ENCODE measurements at regions of chr17 and their contacts with region 1.

Region 1: GRCh38 chr17:49997791-49998703 is 3.0 kb upstream of the DLX3 start:
- DNase-seq: peak; percentile 58 to 91
- H3K4me3 ChIP-seq: no peak overlapping the region
- H3K27ac ChIP-seq: no peak overlapping the region
- H3K4me1 ChIP-seq: peaks cover 3 to 29% (median 11%) of the 10 kb centered on the region in 4 experiments; a peak in 6 of 7 replicates
- H3K27me3 ChIP-seq: peaks cover 32 to 66% (median 52%) of the 10 kb centered on the region in 4 experiments
- CTCF ChIP-seq: peak; percentile 72 to 94 (median 92)
- EP300 ChIP-seq: no peak
- POLR2A ChIP-seq: no peak
- RAD21 ChIP-seq: peak; percentile 99

Region 2: DNA sequence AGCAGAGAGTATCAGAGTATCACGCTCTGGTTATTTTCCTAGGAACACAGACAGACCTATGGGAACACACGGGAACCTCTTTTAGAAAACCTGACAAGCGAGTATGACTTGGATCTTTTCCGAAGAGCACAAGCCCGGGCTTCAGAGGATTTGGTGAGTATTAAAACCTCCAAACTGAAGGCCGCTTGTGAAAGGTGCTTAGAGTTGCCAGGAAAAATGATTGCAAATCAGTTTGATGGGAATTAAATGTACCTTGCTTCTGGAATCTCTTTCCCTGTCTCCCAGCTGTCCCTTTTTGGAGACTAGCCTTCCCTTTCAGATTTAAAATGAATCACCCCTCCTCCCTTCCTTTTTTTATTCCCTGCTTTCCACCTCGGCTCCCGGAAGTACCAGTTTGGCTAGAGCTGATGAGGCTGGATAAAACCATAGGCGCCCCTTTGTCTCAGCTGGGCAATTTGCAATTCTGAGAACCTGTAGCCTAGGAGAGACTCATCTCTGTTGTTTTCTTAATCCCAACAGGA is 182.2 kb before region 1 on chr17:
- CTCF ChIA-PET with region 1: interaction called, 10 read pairs
- POLR2A ChIA-PET with region 1: no interaction called
- DNase-seq: peak in 1 of 2 experiments; percentile 58
- H3K4me3 ChIP-seq: peak overlapping the region; percentile 11 to 54 (median 21); a peak in 7 of 8 replicates
- H3K27ac ChIP-seq: peak overlapping the region; percentile 72
- H3K4me1 ChIP-seq: peaks cover 6 to 26% (median 21%) of the 10 kb centered on the region in 4 experiments; a peak in 6 of 7 replicates
- H3K27me3 ChIP-seq: no peaks in the 10 kb centered on the region
- CTCF ChIP-seq: no peak
- EP300 ChIP-seq: peak in 1 of 2 experiments; percentile 44; a peak in 1 of 3 replicates
- POLR2A ChIP-seq: peak in 1 of 2 experiments; percentile 39; a peak in 1 of 3 replicates
- RAD21 ChIP-seq: no peak

Region 3: DNA sequence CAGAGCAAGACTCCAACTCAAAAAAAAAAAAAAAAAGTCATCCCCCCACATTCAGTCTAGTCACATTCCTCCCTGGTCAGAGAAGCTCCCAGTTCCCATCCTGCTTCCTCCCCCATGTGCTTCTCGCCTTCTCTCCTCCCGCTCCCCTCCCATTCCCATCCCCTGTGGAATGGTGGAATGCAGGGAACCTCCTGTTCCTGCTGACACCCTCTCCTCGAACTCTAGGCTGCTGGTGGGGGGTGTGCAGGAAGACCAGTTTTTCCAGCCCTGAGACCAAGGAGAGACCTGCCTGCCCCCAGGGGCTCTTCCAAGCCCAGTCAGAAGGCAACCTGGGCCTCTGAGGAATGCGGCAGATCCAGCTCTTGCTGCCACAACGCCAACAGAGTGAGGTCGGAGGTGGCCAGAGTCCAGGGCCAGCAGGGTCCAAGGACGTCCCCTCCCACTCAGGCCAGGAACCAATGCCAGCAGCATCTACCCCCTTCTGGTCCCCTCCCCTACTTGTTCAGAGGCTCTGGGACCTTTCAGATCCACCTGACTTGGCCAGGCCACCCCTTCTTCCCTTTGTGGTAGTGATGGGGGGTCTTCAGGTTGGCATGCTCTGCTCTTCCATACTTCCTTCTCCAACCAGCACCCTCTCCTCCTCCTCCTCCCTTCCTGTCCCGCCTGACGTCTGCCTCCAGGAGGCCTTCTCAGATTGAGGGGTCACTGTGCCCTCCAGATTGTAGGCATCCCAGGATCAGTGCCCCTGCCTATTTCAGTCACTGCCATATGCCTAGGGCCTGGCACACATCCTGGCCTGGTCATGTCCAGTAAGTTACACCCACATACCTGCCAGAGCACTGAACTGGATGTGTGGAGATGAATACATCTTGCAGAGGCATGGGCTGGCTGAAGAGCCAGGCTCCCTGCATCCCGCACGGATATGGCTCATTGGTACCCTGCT is 110.7 kb before region 1 on chr17:
- CTCF ChIA-PET with region 1: interaction called, 109 read pairs
- POLR2A ChIA-PET with region 1: no interaction called
- DNase-seq: no peak
- H3K4me3 ChIP-seq: peak overlapping the region in 1 of 4 experiments; percentile 2; a peak in 1 of 8 replicates
- H3K27ac ChIP-seq: no peak overlapping the region
- H3K4me1 ChIP-seq: peaks cover 4 to 16% (median 13%) of the 10 kb centered on the region in 4 experiments
- H3K27me3 ChIP-seq: peaks cover 3 to 26% (median 20%) of the 10 kb centered on the region in 4 experiments
- CTCF ChIP-seq: no peak
- EP300 ChIP-seq: no peak
- POLR2A ChIP-seq: no peak
- RAD21 ChIP-seq: no peak; a peak in 1 of 4 replicates

Region 4: GRCh38 chr17:49935526-49936210 is 62.4 kb before region 1 on chr17:
- CTCF ChIA-PET with region 1: interaction called, 98 read pairs
- POLR2A ChIA-PET with region 1: no interaction called
- DNase-seq: no peak
- H3K4me3 ChIP-seq: no peak overlapping the region
- H3K27ac ChIP-seq: no peak overlapping the region
- H3K4me1 ChIP-seq: peaks cover 0 to 10% (median 0%) of the 10 kb centered on the region in 4 experiments; a peak in 5 of 7 replicates
- H3K27me3 ChIP-seq: no peaks in the 10 kb centered on the region
- CTCF ChIP-seq: no peak
- EP300 ChIP-seq: no peak
- POLR2A ChIP-seq: no peak
- RAD21 ChIP-seq: no peak

Region 5: DNA sequence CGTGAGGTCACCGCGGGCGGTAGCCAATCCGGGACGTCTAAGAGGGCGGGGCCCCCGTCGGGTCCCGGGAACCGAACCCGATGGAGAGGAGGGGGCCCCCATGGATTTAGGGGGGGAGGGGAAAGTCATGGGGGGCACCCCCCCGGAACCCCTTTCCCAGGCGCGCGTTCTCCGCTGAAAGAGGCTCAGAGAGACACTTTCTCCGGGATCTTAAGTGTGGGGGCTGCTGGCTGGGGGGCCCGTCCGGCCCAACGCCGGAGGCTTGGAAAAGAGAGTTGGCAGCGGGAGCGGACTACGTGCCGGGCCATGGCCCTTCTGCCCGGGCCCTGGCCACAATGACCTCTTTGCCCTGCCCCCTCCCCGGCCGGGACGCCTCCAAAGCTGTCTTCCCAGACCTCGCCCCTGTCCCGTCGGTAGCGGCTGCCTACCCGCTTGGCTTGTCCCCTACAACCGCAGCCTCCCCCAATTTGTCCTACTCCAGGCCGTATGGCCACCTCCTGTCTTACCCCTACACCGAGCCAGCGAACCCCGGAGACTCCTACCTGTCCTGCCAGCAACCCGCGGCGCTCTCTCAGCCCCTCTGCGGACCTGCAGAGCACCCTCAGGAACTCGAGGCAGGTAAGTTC is 28.8 kb before region 1 on chr17 and contains the start of gene DLX4:
- CTCF ChIA-PET with region 1: interaction called, 398 read pairs
- POLR2A ChIA-PET with region 1: interaction called, 13 read pairs
- DNase-seq: peak in 1 of 2 experiments; percentile 81
- H3K4me3 ChIP-seq: peak within 1 kb of the TSS; percentile 53 to 78 (median 62)
- H3K27ac ChIP-seq: no peak within 1 kb of the TSS
- H3K4me1 ChIP-seq: peaks cover 0 to 38% (median 25%) of the 10 kb centered on the region in 4 experiments; a peak in 6 of 7 replicates
- H3K27me3 ChIP-seq: peaks cover 91 to 100% (median 96%) of the 10 kb centered on the region in 4 experiments
- CTCF ChIP-seq: no peak
- EP300 ChIP-seq: no peak
- POLR2A ChIP-seq: no peak
- RAD21 ChIP-seq: no peak
- total RNA-seq, gene DLX4: 0.80 and 0.88 TPM in 2 replicates

Region 6: DNA sequence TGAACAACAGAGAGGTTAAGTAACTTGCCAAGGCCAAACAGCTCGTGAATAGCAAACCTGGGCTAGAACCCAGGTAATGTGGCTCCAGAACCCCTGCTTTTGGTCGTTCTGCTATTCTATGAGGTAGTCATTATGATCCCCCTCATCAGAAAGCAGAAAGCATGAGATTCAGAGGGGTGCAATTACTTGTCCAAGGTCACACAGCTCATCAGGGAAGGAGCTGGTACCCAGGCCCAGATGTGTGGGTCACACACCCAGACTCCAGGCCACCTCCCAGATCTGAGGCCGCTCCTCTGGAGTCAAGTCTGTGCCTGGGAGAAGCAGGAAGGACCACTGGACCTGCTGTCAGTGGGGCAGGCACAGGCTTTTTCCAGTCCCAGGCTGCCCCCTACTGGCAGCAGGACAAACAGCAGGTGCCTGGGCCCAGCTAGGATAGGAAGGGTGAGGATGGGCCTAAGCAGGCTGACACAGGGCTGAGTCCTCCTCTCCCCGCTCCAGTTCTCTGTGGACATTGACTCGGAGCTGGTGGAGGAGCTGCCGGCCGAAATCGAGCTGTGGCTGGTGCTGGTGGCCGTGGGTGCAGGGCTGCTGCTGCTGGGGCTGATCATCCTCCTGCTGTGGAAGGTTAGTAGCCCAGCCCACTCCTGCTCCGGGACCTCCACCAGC is 89.3 kb after region 1 on chr17:
- CTCF ChIA-PET with region 1: interaction called, 23 read pairs
- POLR2A ChIA-PET with region 1: no interaction called
- DNase-seq: peak in 1 of 2 experiments; percentile 94
- H3K4me3 ChIP-seq: no peak overlapping the region
- H3K27ac ChIP-seq: no peak overlapping the region
- H3K4me1 ChIP-seq: no peaks in the 10 kb centered on the region; a peak in 1 of 7 replicates
- H3K27me3 ChIP-seq: no peaks in the 10 kb centered on the region
- CTCF ChIP-seq: peak; percentile 98 to 99 (median 98)
- EP300 ChIP-seq: no peak
- POLR2A ChIP-seq: no peak
- RAD21 ChIP-seq: peak; percentile 96 to 98

Region 7: DNA sequence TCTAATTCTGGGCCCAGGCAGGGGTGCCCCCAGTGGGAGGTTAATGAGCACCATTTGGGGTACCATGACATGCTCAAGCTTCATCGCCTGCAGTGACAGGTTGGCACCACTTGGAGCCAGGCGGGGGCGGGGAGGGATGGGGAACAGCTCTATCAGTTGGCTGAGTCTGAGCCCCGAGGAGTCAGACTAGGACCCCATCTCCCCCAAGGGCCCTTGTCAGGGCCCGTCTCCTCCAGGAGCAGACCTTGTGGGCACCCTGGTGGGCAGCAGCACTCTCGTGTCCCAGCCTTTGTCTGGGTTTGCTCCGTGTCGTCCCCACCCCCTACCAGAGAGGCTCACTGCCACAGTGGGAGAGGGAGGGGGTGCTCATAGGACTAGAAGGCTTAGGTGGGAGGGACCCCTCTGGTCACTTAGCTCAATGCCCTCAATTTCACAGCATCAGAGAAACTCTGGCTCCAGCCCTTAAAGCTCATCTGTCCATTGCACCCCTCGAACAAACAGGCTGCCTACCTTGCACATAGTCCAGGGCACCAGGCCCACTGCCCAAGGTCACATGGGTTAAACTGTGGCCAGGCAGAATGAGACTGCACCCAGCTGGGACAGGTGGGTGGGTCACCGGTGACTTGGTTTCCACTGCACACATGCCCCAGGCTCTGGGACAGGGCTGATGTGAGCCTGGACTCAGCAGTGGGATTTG is 148.3 kb after region 1 on chr17:
- CTCF ChIA-PET with region 1: no interaction called
- POLR2A ChIA-PET with region 1: no interaction called
- DNase-seq: no peak
- H3K4me3 ChIP-seq: no peak overlapping the region
- H3K27ac ChIP-seq: no peak overlapping the region
- H3K4me1 ChIP-seq: peaks cover 0 to 28% (median 13%) of the 10 kb centered on the region in 4 experiments; a peak in 6 of 7 replicates
- H3K27me3 ChIP-seq: peaks cover 2 to 17% (median 15%) of the 10 kb centered on the region in 4 experiments; a peak in 6 of 7 replicates
- CTCF ChIP-seq: peak in 2 of 3 experiments; percentile 4 to 6; a peak in 1 of 4 replicates
- EP300 ChIP-seq: no peak
- POLR2A ChIP-seq: no peak
- RAD21 ChIP-seq: no peak

Region 8: DNA sequence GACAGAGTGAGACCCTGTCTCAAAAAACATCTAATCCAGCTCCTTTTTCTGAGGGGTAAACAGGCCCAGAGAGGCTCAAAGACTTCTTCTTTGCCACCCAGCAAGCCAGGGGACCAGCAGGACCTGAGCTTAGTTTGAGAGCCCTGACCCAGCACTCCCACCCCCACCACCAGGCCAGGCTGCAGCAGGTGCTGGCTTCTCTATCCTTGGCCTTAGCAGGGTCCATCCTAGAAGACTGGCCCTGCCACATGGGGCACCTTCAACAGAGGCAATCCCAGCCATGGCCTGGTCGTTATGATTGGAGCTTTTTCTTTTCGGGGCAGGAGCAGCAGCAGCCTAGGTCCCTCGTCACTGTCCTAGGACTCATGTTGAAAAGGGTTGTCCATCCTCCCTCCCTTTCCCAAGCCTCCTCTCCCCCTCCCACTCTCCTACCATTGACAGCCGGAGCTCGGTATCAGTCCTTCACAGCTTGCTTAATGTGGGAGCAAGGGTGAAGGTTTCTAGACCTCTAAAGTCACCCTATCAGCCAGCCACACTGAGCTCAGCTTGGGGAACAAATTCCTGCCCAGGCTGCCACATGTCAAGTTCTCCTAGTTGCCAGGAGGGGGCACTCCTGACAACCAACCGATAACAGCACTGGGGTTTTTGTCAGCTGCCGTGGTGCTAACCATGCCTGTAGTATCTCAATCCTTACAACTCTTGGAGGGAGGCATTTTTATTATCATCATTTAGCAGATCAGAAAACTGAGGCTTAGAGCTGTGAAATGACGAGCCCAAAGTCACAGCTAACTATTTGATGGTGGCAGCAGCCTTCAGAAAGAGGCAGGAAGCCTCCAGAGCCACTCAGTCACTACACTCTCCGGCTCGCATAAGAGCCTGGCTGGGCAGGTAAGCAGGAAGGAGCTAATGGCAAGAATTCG is 363.8 kb after region 1 on chr17:
- CTCF ChIA-PET with region 1: no interaction called
- POLR2A ChIA-PET with region 1: no interaction called
- DNase-seq: peak; percentile 34 to 67
- H3K4me3 ChIP-seq: no peak overlapping the region
- H3K27ac ChIP-seq: no peak overlapping the region
- H3K4me1 ChIP-seq: peaks cover 0 to 27% (median 11%) of the 10 kb centered on the region in 4 experiments; a peak in 6 of 7 replicates
- H3K27me3 ChIP-seq: no peaks in the 10 kb centered on the region
- CTCF ChIP-seq: peak; percentile 63 to 85 (median 79)
- EP300 ChIP-seq: no peak
- POLR2A ChIP-seq: no peak; a peak in 1 of 3 replicates
- RAD21 ChIP-seq: peak; percentile 53 to 65

Region 9: GRCh38 chr17:50604513-50604912 is 606.5 kb after region 1 on chr17:
- CTCF ChIA-PET with region 1: no interaction called
- POLR2A ChIA-PET with region 1: no interaction called
- DNase-seq: no peak
- H3K4me3 ChIP-seq: no peak overlapping the region
- H3K27ac ChIP-seq: no peak overlapping the region
- H3K4me1 ChIP-seq: peaks cover 0 to 15% (median 4%) of the 10 kb centered on the region in 4 experiments; a peak in 5 of 7 replicates
- H3K27me3 ChIP-seq: no peaks in the 10 kb centered on the region
- CTCF ChIP-seq: no peak
- EP300 ChIP-seq: no peak
- POLR2A ChIP-seq: no peak
- RAD21 ChIP-seq: no peak